Activated CD4-positive, alpha-beta T cell treated with anti-CD3 and anti-CD28 coated beads for 36 hours (primary cell): ENCODE measurements at regions of chr15 and their contacts with region 1.

Region 1: GRCh38 chr15:90529371-90530249 is at the start of gene CRTC3:
- DNase-seq: peak; percentile 72
- ATAC-seq: peak; percentile 88
- H3K4me3 Mint-ChIP-seq: peak within 1 kb of the TSS; percentile 93
- H3K27ac Mint-ChIP-seq: peak within 1 kb of the TSS; percentile 92
- H3K4me1 Mint-ChIP-seq: peaks cover 42% of the 10 kb centered on the region
- H3K27me3 Mint-ChIP-seq: no peaks in the 10 kb centered on the region
- total RNA-seq, gene CRTC3: 32.4 to 36.2 TPM

Region 2: DNA sequence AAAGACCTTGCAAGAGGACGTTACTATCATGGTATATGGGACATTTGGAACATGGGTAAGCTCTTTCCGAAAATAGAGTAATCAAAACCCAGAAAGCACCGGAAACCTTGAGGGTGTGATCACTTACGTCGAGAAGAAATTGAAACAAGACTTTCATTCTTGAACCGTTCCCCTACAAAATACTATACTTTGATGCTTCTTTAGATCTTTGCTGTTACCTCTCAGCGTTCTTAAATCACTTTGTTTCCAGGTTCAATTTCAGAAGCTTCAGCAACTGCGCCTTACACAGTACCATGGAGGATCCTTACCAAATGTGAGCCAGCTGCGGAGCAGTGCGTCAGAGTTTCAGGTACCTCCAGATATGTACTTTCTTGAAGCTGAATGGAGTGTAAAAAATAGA is 10.2 kb after region 1 on chr15:
- CTCF ChIA-PET with region 1: interaction called, 11 read pairs
- POLR2A ChIA-PET with region 1: interaction called, 7 read pairs
- intact Hi-C with region 1: no loop called
- DNase-seq: peak; percentile 66
- ATAC-seq: peak; percentile 92
- H3K4me3 Mint-ChIP-seq: peak overlapping the region; percentile 78
- H3K27ac Mint-ChIP-seq: peak overlapping the region; percentile 99
- H3K4me1 Mint-ChIP-seq: peaks cover 76% of the 10 kb centered on the region
- H3K27me3 Mint-ChIP-seq: no peaks in the 10 kb centered on the region

Region 3: GRCh38 chr15:90560229-90560776 is 30.7 kb after region 1 on chr15:
- CTCF ChIA-PET with region 1: interaction called, 8 read pairs
- POLR2A ChIA-PET with region 1: interaction called, 3 read pairs
- intact Hi-C with region 1: loop called in 1 of 2 experiments (anchors 2 kb)
- DNase-seq: no peak
- ATAC-seq: no peak
- H3K4me3 Mint-ChIP-seq: no peak overlapping the region
- H3K27ac Mint-ChIP-seq: no peak overlapping the region
- H3K4me1 Mint-ChIP-seq: peaks cover 85% of the 10 kb centered on the region
- H3K27me3 Mint-ChIP-seq: no peaks in the 10 kb centered on the region

Region 4: DNA sequence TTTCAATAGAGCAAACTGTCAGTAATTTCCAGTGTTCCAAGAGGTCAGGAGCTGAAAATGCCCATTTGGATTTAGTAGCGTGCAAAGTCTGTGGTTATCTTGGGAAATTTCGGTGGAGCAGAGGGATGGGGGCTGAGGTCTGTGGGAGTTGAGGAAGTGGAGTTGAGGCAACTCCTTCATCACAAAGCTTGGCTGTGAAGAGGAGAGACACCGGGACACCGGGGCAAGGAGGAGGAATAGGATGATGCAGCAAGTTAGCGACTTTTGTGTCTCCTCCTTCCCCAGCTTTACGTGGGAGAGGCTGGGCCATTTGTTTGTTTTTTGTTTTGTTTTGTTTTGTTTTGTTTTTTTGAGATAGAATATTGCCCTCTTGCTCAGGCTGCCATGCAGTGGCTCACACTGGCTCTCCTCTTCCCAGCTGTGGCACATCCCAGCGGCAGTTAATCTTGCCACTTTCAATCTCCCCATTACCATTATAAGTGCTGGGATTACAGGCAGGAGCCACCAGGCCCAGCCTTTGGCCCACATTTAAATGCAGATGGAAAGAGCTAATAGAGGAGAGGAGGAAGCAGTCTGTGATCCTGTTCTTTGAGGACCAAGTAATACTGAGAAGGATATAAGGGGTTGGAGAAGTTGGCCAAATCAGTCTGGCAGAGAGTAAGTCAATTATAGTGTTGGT is 47.2 kb after region 1 on chr15:
- CTCF ChIA-PET with region 1: no interaction called
- POLR2A ChIA-PET with region 1: no interaction called
- intact Hi-C with region 1: no loop called
- DNase-seq: no peak
- ATAC-seq: no peak
- H3K4me3 Mint-ChIP-seq: no peak overlapping the region
- H3K27ac Mint-ChIP-seq: peak overlapping the region; percentile 23
- H3K4me1 Mint-ChIP-seq: peaks cover 70% of the 10 kb centered on the region
- H3K27me3 Mint-ChIP-seq: no peaks in the 10 kb centered on the region

Region 5: DNA sequence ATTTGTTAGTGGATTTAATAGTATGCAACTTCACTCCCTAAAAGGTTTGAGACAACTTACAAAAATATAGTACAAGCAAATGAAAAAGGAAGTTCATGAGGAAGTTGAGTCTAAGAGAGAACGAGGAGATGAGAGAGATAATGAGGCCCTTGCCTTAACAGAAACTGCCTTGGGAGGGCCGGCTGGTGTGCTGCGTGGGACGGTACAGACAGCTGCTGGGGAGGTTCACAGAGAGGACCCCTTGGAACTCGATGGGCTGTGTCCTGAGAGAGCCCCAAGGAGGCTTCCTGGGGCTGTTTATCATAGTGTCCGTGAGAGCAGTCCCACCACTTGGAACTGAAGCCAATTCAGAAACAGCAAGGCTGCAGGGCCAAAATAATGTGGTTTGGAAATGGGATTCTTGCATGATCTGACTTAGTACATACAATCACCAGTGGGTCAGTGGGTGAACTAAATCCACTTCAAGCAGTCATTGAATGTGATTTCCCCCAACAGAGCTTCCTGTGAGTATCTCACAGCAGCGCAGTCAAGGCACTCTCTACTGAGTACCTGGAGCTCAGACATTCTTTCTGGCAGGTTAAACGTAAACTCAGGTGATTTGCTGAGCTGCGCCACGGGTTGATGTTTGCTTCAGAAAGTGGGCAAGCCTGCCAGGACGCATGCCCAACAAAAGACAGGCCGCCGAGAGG is 90.9 kb after region 1 on chr15:
- CTCF ChIA-PET with region 1: interaction called, 3 read pairs
- POLR2A ChIA-PET with region 1: no interaction called
- intact Hi-C with region 1: loop called in 1 of 2 experiments (anchors 5 kb)
- DNase-seq: peak; percentile 51
- ATAC-seq: peak; percentile 35
- H3K4me3 Mint-ChIP-seq: no peak overlapping the region
- H3K27ac Mint-ChIP-seq: peak overlapping the region; percentile 52
- H3K4me1 Mint-ChIP-seq: peaks cover 35% of the 10 kb centered on the region
- H3K27me3 Mint-ChIP-seq: no peaks in the 10 kb centered on the region